PC-3 (cell line): ENCODE measurements at regions of chrX and their contacts with region 1.

Region 1: DNA sequence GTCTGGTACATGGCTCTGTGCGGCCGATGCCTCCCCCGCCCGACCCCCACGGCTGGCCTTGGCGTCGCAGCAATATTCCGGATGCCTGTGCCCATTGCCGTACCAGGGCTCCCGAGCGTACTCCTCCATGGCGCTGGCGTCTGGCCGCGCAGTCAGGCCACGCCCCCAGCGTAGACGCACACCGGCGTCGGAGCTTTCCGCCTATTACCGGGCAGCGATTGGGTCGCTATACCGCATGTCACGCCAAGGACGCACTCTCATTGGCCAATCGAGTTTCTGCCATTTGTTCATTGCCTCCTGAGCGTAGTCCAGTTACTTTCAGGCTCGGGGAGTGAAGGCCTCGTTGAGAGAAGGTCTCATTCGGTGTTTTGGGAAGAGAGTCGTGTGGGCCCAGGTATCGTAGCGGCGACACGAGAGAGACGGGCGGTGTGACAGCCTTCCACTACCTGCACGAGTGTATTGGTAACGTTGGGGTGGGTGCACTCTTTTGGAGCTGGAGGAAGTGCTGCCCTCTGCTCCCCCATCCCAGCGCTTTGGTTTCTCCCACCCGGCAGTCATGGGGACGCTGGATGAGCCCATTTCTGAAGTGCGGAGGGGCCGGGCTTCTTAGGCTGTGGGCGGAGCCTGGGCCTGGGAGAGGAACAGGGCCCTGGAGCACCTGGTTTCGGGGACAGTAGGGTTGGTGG is at the starts of genes PQBP1 and TIMM17B:
- DNase-seq: peak; percentile 97
- ATAC-seq: peak; percentile 93
- H3K4me3 ChIP-seq: peak within 1 kb of the TSS; percentile 92
- H3K27ac ChIP-seq: peak within 1 kb of the TSS; percentile 91
- H3K4me1 ChIP-seq: peaks cover 17% of the 10 kb centered on the region
- H3K27me3 ChIP-seq: no peaks in the 10 kb centered on the region
- CTCF ChIP-seq: no peak
- total RNA-seq, gene PQBP1: 189 and 241 TPM in 2 replicates
- total RNA-seq, gene TIMM17B: 101 and 119 TPM in 2 replicates

Region 2: DNA sequence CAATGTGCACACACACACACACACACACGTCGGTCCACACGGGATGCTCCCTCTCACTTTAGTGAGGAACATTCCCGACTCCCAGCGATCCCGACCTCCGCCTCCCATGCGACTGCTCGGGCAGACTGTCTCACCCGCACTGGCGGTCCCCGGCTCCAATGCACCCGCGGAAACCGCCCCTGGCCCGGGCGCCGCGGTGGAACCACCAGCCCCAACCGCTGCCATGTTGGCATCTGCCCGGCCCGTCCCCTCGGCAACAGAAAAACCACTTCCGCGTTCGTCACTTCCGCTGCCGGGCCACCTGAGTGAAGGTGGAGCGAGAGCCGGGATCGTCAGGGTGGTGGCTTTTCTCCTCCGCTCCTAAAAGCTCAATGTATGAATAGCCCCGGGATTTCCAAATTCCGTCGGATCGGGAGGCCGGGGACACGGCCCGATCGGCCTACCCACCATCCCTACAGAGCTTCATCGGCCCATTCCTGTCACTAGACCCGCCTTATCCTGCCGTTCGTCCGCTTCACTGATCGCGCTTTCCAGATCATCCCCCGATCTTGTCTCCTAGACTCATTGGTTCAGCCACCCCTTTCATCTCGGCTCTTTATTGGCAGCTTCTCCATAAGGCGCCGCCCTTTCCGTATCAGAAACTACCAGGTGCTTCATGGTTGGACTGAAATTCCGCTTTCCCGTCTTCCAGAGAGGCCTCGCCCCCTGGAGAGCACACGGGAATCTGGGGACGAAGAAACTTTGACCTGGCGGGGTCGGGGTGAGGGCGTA is 13.8 kb after region 1 on chrX and contains the start of gene SLC35A2:
- CTCF ChIA-PET with region 1: no interaction called
- POLR2A ChIA-PET with region 1: interaction called, 8 read pairs
- intact Hi-C with region 1: loop called (anchors 2 kb)
- DNase-seq: peak; percentile 84
- ATAC-seq: peak; percentile 93
- H3K4me3 ChIP-seq: peak within 1 kb of the TSS; percentile 85
- H3K27ac ChIP-seq: peak within 1 kb of the TSS; percentile 91
- H3K4me1 ChIP-seq: peaks cover 16% of the 10 kb centered on the region
- H3K27me3 ChIP-seq: no peaks in the 10 kb centered on the region
- CTCF ChIP-seq: no peak
- total RNA-seq, gene SLC35A2: 46.6 and 46.8 TPM in 2 replicates